H1 (cell line): ENCODE measurements at regions of chr3 and their contacts with region 1.

Region 1: DNA sequence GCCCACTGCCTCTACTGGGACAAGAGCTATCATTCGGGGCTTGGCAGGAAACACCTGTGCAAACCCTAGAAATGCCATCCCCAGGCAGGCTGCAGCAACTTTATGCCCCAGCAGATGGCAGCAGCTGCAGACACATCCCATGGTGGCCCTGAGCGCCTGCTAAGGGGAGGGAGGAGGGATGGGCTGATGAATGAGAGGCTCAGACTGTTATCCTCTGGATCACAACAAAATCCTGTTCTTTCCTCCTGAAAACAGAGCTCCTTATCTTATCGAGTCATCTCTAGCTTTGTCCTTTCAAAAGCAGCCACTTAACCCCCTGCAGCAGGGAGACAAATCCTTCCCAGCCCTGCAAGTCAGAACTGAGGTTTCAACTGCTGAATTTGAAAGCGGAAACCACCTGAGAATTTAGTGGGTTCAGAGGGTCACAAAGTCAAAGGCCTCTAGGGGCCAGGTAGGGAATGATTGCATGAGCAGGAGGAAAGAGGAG is 90.6 kb upstream of the PROK2 start:
- DNase-seq: peak; percentile 88 to 94
- H3K4me3 ChIP-seq: no peak overlapping the region
- H3K27ac ChIP-seq: no peak overlapping the region
- H3K4me1 ChIP-seq: peaks cover 1 to 13% (median 3%) of the 10 kb centered on the region in 4 experiments; a peak in 5 of 7 replicates
- H3K27me3 ChIP-seq: no peaks in the 10 kb centered on the region
- CTCF ChIP-seq: peak; percentile 82 to 96 (median 96)
- EP300 ChIP-seq: no peak; a peak in 1 of 3 replicates
- POLR2A ChIP-seq: no peak
- RAD21 ChIP-seq: peak; percentile 90

Region 2: DNA sequence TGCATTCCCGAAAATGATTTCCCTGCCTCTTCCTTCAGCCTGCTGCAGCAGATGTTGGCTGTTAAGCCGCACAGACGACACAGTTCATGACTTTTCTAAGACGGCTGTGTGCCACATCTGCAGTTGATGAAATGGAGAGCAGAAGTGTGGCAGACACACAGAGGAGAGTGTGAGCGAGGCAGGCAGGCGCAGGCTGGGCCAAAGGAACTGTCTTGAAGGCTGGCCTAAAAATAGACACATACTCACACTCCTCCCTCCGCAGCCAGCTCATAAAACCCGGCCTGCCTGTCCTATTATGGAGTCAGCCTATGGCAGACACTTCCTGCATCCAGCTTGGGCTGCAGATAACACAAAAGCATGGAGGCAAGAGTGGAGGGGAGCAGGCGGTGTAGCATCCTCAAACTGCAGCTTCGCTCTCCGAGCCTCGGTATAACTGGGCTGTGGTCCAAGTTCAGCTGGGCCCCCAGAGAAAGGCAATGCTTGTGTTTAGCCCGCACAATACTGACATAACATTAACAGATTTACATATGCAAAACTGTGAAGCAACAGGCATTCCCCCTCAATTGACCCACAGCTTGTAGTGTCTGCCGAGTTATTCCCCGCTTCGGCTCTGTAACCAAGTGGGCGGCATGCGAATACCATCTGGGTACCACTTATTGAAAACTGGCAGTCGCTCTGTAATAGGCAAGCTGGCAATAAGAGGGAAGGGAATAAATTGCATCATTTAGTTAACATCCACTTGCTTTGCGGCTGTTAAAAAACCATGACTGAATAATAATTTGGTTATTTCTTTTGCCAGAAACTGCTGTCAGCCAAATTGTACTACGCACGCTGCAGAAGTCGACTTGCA is 332.8 kb before region 1 on chr3:
- CTCF ChIA-PET with region 1: no interaction called
- POLR2A ChIA-PET with region 1: no interaction called
- DNase-seq: no peak
- H3K4me3 ChIP-seq: no peak overlapping the region
- H3K27ac ChIP-seq: no peak overlapping the region
- H3K4me1 ChIP-seq: peaks cover 0 to 14% (median 5%) of the 10 kb centered on the region in 4 experiments; a peak in 5 of 7 replicates
- H3K27me3 ChIP-seq: no peaks in the 10 kb centered on the region
- CTCF ChIP-seq: no peak
- EP300 ChIP-seq: no peak
- POLR2A ChIP-seq: no peak
- RAD21 ChIP-seq: no peak

Region 3: DNA sequence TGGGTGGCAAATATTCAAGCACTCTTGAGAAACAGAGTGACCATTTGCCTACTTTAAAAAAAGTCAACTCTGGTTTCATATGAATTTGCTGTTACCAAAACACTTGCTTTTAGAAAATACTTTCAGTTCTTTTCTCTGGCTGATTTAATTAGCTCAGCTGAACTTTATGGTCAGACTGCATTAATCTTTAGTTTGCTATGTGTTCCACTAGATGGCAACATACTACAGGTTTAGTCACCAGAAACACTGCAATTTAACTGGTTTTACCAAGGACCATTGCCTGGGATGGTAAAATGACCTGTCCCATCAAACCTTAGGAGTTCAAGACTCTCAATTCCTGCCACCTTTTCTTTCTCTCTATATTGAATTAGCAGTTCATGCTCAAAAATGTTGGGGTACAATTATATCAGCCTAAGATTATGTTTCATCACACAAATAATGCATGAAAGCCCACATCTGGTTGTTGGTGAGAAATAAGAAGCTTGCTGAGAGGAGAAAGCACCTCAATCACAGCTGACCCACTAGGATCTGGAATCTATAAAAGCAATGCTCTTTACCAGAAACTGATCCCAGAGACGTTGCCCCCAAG is 164.5 kb before region 1 on chr3:
- CTCF ChIA-PET with region 1: interaction called, 12 read pairs
- POLR2A ChIA-PET with region 1: interaction called, 3 read pairs
- DNase-seq: no peak
- H3K4me3 ChIP-seq: no peak overlapping the region
- H3K27ac ChIP-seq: no peak overlapping the region
- H3K4me1 ChIP-seq: no peaks in the 10 kb centered on the region
- H3K27me3 ChIP-seq: no peaks in the 10 kb centered on the region
- CTCF ChIP-seq: peak in 2 of 3 experiments; percentile 65 to 74; a peak in 3 of 4 replicates
- EP300 ChIP-seq: no peak
- POLR2A ChIP-seq: no peak
- RAD21 ChIP-seq: peak; percentile 90 to 94

Region 4: DNA sequence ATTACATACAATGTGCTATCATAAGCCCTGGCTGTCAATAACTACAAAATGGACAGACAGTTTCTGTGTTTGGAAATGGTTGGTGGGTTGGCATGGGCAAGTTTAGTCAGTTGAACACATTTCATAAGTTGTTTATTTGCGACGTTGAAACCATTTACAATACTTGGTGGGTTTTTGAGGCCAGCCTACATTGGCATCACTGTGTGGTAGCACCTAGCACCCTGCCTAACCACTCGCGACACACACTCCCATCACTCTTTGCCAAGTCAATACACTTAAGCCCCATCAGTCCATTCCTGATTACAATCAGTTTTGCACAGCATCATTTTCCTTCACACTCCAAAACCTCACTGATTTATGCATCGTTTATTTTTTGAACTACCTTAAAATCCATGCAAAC is 104.4 kb before region 1 on chr3:
- CTCF ChIA-PET with region 1: no interaction called
- POLR2A ChIA-PET with region 1: no interaction called
- DNase-seq: peak in 1 of 2 experiments; percentile 27
- H3K4me3 ChIP-seq: no peak overlapping the region
- H3K27ac ChIP-seq: no peak overlapping the region
- H3K4me1 ChIP-seq: peaks cover 0 to 12% (median 9%) of the 10 kb centered on the region in 4 experiments; a peak in 3 of 7 replicates
- H3K27me3 ChIP-seq: no peaks in the 10 kb centered on the region
- CTCF ChIP-seq: no peak
- EP300 ChIP-seq: no peak
- POLR2A ChIP-seq: no peak
- RAD21 ChIP-seq: no peak

Region 5: GRCh38 chr3:71859123-71859519 is 16.4 kb before region 1 on chr3:
- CTCF ChIA-PET with region 1: interaction called, 15 read pairs
- POLR2A ChIA-PET with region 1: interaction called, 10 read pairs
- DNase-seq: no peak
- H3K4me3 ChIP-seq: no peak overlapping the region
- H3K27ac ChIP-seq: no peak overlapping the region
- H3K4me1 ChIP-seq: peaks cover 7 to 13% (median 9%) of the 10 kb centered on the region in 4 experiments
- H3K27me3 ChIP-seq: no peaks in the 10 kb centered on the region
- CTCF ChIP-seq: peak in 2 of 3 experiments; percentile 77 to 82; a peak in 3 of 4 replicates
- EP300 ChIP-seq: no peak
- POLR2A ChIP-seq: no peak
- RAD21 ChIP-seq: peak; percentile 93 to 97

Region 6: GRCh38 chr3:71896751-71897150 is 21.2 kb after region 1 on chr3:
- CTCF ChIA-PET with region 1: interaction called, 20 read pairs
- POLR2A ChIA-PET with region 1: no interaction called
- DNase-seq: no peak
- H3K4me3 ChIP-seq: no peak overlapping the region
- H3K27ac ChIP-seq: no peak overlapping the region
- H3K4me1 ChIP-seq: peaks cover 3 to 7% (median 5%) of the 10 kb centered on the region in 4 experiments; a peak in 4 of 7 replicates
- H3K27me3 ChIP-seq: no peaks in the 10 kb centered on the region
- CTCF ChIP-seq: no peak
- EP300 ChIP-seq: no peak
- POLR2A ChIP-seq: no peak
- RAD21 ChIP-seq: no peak

Region 7: GRCh38 chr3:71926262-71926600 is 50.7 kb after region 1 on chr3:
- CTCF ChIA-PET with region 1: interaction called, 19 read pairs
- POLR2A ChIA-PET with region 1: no interaction called
- DNase-seq: peak; percentile 43 to 70
- H3K4me3 ChIP-seq: no peak overlapping the region
- H3K27ac ChIP-seq: no peak overlapping the region
- H3K4me1 ChIP-seq: peaks cover 6 to 19% (median 11%) of the 10 kb centered on the region in 4 experiments; a peak in 6 of 7 replicates
- H3K27me3 ChIP-seq: no peaks in the 10 kb centered on the region
- CTCF ChIP-seq: peak; percentile 36 to 88 (median 79)
- EP300 ChIP-seq: no peak
- POLR2A ChIP-seq: no peak
- RAD21 ChIP-seq: peak; percentile 82 to 87

Region 8: DNA sequence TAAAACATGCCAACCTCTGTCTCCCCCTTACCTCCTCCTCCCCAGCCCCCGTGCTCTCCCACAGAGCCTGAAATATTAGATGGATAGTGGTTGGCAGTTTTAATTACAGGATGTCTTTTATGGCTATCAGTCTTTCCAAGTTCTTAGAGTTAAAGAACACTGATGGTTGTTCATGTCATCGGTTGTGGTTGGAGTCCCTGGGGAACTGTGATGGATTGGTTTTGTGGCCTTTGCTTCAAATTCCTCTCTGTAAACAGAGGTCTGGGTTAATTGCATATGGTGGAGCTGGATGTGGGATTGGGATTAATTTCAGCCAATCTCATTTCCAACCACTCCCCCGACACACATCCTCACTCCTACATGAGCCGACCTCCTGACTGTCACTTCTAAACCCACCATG is 73.9 kb after region 1 on chr3:
- CTCF ChIA-PET with region 1: interaction called, 49 read pairs
- POLR2A ChIA-PET with region 1: interaction called, 4 read pairs
- DNase-seq: no peak
- H3K4me3 ChIP-seq: no peak overlapping the region
- H3K27ac ChIP-seq: no peak overlapping the region
- H3K4me1 ChIP-seq: peaks cover 0 to under 1% (median 0%) of the 10 kb centered on the region in 4 experiments; a peak in 1 of 7 replicates
- H3K27me3 ChIP-seq: peaks cover 0 to 1% (median 0%) of the 10 kb centered on the region in 4 experiments; a peak in 1 of 7 replicates
- CTCF ChIP-seq: no peak
- EP300 ChIP-seq: no peak
- POLR2A ChIP-seq: no peak
- RAD21 ChIP-seq: no peak

Region 9: GRCh38 chr3:72131899-72132298 is 256.4 kb after region 1 on chr3:
- CTCF ChIA-PET with region 1: no interaction called
- POLR2A ChIA-PET with region 1: no interaction called
- DNase-seq: no peak
- H3K4me3 ChIP-seq: no peak overlapping the region
- H3K27ac ChIP-seq: no peak overlapping the region
- H3K4me1 ChIP-seq: peaks cover 0 to 4% (median 1%) of the 10 kb centered on the region in 4 experiments; a peak in 3 of 7 replicates
- H3K27me3 ChIP-seq: no peaks in the 10 kb centered on the region; a peak in 1 of 7 replicates
- CTCF ChIP-seq: no peak
- EP300 ChIP-seq: no peak
- POLR2A ChIP-seq: no peak
- RAD21 ChIP-seq: no peak

Region 10: GRCh38 chr3:72163809-72164634 is 288.5 kb after region 1 on chr3:
- CTCF ChIA-PET with region 1: no interaction called
- POLR2A ChIA-PET with region 1: no interaction called
- DNase-seq: no peak
- H3K4me3 ChIP-seq: no peak overlapping the region
- H3K27ac ChIP-seq: no peak overlapping the region
- H3K4me1 ChIP-seq: no peaks in the 10 kb centered on the region
- H3K27me3 ChIP-seq: no peaks in the 10 kb centered on the region; a peak in 1 of 7 replicates
- CTCF ChIP-seq: no peak
- EP300 ChIP-seq: no peak
- POLR2A ChIP-seq: no peak
- RAD21 ChIP-seq: no peak

Region 11: DNA sequence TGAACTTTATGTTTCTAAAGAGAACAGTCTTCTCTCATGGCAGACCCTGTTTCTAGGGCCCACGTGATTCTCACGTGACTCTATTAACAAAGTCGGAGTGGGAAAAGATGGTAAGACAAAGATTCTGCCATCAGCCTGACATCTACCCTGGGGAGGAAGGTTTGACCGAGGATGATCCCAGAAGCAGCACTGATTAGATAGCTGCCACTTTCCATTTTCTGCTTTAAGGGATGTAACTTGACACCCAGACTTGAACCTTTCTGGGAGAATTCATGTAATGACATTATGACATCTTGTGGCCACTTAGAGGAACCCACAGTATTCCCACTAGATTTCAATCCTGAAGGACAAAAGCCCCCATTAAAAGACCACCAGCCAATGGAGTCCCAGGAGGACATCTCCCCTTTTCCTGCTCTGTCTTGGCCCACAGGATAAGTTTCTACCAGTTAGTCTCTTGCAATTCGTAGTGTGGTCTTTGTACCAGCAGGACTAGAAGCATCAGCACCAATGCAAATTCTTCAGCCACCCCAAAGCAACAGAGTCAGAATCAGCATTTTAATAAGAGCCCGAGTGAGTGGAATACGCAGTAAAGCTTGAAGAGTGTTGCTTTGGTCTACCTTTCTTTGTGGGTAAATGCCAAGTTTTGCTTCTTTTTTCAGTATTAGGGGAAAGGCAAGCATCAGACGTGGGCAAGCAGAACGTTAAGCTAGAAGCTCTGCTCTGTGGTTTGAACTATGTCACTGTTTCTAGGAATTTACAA is 389.9 kb after region 1 on chr3:
- CTCF ChIA-PET with region 1: interaction called, 23 read pairs
- POLR2A ChIA-PET with region 1: no interaction called
- DNase-seq: no peak
- H3K4me3 ChIP-seq: no peak overlapping the region
- H3K27ac ChIP-seq: no peak overlapping the region
- H3K4me1 ChIP-seq: peaks cover 0 to 6% (median 0%) of the 10 kb centered on the region in 4 experiments; a peak in 1 of 7 replicates
- H3K27me3 ChIP-seq: no peaks in the 10 kb centered on the region
- CTCF ChIP-seq: peak in 2 of 3 experiments; percentile 41 to 52; a peak in 3 of 4 replicates
- EP300 ChIP-seq: no peak
- POLR2A ChIP-seq: no peak
- RAD21 ChIP-seq: peak; percentile 80 to 81